Activated CD4-positive, alpha-beta T cell treated with anti-CD3 and anti-CD28 coated beads for 36 hours (primary cell): ENCODE measurements at regions of chr1 and their contacts with region 1.

Region 1: GRCh38 chr1:219209578-219209977 is 35.9 kb downstream of the LYPLAL1 start:
- DNase-seq: no peak
- ATAC-seq: no peak
- H3K4me3 Mint-ChIP-seq: no peak overlapping the region
- H3K27ac Mint-ChIP-seq: no peak overlapping the region
- H3K4me1 Mint-ChIP-seq: no peaks in the 10 kb centered on the region
- H3K27me3 Mint-ChIP-seq: no peaks in the 10 kb centered on the region

Region 2: GRCh38 chr1:218874313-218874712 is 335.3 kb before region 1 on chr1:
- CTCF ChIA-PET with region 1: no interaction called
- POLR2A ChIA-PET with region 1: no interaction called
- intact Hi-C with region 1: no loop called
- DNase-seq: no peak
- ATAC-seq: no peak
- H3K4me3 Mint-ChIP-seq: no peak overlapping the region
- H3K27ac Mint-ChIP-seq: no peak overlapping the region
- H3K4me1 Mint-ChIP-seq: no peaks in the 10 kb centered on the region
- H3K27me3 Mint-ChIP-seq: peaks cover under 1% of the 10 kb centered on the region

Region 3: DNA sequence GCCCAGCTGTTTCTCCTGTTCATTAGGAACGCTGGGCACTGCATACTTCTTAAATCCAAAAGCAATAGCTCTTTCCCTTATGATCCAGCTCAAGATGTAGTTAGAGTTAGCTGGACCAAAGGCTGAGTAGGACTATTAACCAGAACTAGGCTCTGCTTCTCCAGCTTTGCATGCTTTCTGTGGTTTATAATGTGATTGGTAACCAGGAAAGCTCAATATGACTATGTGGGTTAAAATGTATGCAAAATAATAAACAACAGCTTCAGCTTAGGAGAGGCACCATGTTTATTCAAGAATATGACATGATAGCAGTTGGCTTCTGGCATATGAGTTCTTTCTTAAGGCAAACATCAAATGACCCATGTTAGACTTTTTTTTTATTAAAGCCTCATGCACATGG is 37.9 kb after region 1 on chr1:
- CTCF ChIA-PET with region 1: no interaction called
- POLR2A ChIA-PET with region 1: no interaction called
- intact Hi-C with region 1: no loop called
- DNase-seq: no peak
- ATAC-seq: no peak
- H3K4me3 Mint-ChIP-seq: no peak overlapping the region
- H3K27ac Mint-ChIP-seq: no peak overlapping the region
- H3K4me1 Mint-ChIP-seq: no peaks in the 10 kb centered on the region
- H3K27me3 Mint-ChIP-seq: no peaks in the 10 kb centered on the region

Region 4: DNA sequence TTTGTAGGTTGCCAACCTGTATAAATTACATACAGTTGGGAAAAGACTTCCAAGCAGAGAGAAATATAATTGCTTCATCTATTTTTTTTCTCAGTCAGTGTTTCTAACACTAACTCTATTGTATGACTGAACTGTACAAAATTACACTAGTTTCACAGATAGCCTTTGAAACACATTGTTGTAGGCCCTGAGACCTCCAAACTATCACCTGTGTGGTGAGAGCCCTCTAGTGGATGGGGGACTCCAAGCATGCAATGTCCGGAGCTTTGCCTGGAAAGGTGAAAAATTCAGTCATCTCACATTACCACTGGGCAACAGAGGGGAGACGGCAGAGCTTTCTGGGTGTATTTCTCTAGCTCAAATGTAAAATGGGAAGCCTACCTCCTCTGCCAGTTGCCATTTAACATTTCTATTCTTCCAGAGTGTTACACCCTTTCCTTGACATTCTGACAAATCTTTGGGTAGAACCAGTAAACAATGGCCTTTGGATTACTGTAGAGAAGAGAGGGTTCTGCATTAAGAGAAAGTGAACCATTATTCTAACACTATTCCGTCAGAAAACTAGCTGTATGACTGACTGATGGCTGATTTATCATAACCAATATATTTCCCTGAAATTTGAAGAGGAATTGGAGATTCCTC is 176.3 kb after region 1 on chr1:
- CTCF ChIA-PET with region 1: interaction called, 4 read pairs
- POLR2A ChIA-PET with region 1: no interaction called
- intact Hi-C with region 1: loop called (anchors 1 to 2 kb)
- DNase-seq: peak; percentile 57
- ATAC-seq: peak; percentile 60
- H3K4me3 Mint-ChIP-seq: no peak overlapping the region
- H3K27ac Mint-ChIP-seq: no peak overlapping the region
- H3K4me1 Mint-ChIP-seq: no peaks in the 10 kb centered on the region
- H3K27me3 Mint-ChIP-seq: peaks cover 8% of the 10 kb centered on the region

Region 5: GRCh38 chr1:219416594-219417238 is 207.1 kb after region 1 on chr1:
- CTCF ChIA-PET with region 1: no interaction called
- POLR2A ChIA-PET with region 1: no interaction called
- intact Hi-C with region 1: loop called (anchors 2 kb)
- DNase-seq: peak; percentile 78
- ATAC-seq: peak; percentile 72
- H3K4me3 Mint-ChIP-seq: no peak overlapping the region
- H3K27ac Mint-ChIP-seq: no peak overlapping the region
- H3K4me1 Mint-ChIP-seq: no peaks in the 10 kb centered on the region
- H3K27me3 Mint-ChIP-seq: peaks cover 4% of the 10 kb centered on the region

Region 6: DNA sequence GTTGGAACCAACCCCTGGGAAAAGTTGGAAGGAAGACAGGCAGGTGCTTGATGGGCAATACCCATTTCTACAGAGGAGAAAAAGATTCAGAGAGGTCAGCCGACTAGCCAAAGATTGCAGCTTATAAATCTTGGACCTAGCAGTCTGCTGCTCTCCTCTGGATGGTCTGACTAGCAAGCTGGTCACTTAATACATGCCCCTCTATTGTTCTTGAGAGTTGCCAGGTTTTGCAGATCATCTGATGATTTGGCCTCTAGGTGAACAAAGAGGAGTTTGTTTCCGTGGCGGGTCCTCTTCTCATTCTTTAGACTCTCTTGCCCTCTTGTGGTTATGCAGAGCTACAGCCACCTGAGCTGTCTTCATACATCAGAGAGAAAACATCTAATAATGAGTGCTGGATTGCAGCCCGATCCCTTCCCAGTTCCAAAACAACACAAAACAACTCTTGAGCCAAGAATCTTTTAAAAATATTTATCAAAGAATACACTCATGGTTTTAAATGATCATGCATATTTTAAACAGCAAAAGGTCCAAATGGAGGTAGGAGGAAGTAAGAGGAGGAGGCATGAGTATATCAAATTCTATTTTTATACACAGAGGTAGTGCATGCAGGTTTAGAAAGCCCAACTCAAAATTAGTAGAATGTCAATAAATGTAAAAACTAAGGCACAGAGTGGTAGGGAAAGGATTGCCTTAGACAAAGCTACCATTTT is 603.1 kb after region 1 on chr1:
- CTCF ChIA-PET with region 1: no interaction called
- POLR2A ChIA-PET with region 1: no interaction called
- intact Hi-C with region 1: loop called in 1 of 2 experiments (anchors 10 kb)
- DNase-seq: peak; percentile 14
- ATAC-seq: peak; percentile 55
- H3K4me3 Mint-ChIP-seq: no peak overlapping the region
- H3K27ac Mint-ChIP-seq: no peak overlapping the region
- H3K4me1 Mint-ChIP-seq: no peaks in the 10 kb centered on the region
- H3K27me3 Mint-ChIP-seq: peaks cover 9% of the 10 kb centered on the region